ENCODE measurements at regions of chr7 and their contacts with region 1.

Region 1: GRCh38 chr7:99143853-99144672 is at the start of gene SMURF1:
- DNase-seq: peak; percentile 50 to 89 (median 80)
- ATAC-seq: peak; percentile 84
- H3K4me3 ChIP-seq: peak within 1 kb of the TSS; percentile 94
- H3K4me3 Mint-ChIP-seq: peak within 1 kb of the TSS; percentile 93 to 99 (median 96)
- H3K27ac ChIP-seq: peak within 1 kb of the TSS; percentile 90
- H3K27ac Mint-ChIP-seq: peak within 1 kb of the TSS; percentile 88 to 98 (median 96)
- H3K4me1 ChIP-seq: peaks cover 5 to 14% of the 10 kb centered on the region in 2 donors
- H3K4me1 Mint-ChIP-seq: peaks cover 30 to 49% (median 39%) of the 10 kb centered on the region in 7 donors
- H3K27me3 ChIP-seq: no peaks in the 10 kb centered on the region
- H3K27me3 Mint-ChIP-seq: peaks cover 0 to 7% (median 5%) of the 10 kb centered on the region in 5 donors
- total RNA-seq, gene SMURF1: 14.6 to 26.4 (median 20.8) TPM

Region 2: DNA sequence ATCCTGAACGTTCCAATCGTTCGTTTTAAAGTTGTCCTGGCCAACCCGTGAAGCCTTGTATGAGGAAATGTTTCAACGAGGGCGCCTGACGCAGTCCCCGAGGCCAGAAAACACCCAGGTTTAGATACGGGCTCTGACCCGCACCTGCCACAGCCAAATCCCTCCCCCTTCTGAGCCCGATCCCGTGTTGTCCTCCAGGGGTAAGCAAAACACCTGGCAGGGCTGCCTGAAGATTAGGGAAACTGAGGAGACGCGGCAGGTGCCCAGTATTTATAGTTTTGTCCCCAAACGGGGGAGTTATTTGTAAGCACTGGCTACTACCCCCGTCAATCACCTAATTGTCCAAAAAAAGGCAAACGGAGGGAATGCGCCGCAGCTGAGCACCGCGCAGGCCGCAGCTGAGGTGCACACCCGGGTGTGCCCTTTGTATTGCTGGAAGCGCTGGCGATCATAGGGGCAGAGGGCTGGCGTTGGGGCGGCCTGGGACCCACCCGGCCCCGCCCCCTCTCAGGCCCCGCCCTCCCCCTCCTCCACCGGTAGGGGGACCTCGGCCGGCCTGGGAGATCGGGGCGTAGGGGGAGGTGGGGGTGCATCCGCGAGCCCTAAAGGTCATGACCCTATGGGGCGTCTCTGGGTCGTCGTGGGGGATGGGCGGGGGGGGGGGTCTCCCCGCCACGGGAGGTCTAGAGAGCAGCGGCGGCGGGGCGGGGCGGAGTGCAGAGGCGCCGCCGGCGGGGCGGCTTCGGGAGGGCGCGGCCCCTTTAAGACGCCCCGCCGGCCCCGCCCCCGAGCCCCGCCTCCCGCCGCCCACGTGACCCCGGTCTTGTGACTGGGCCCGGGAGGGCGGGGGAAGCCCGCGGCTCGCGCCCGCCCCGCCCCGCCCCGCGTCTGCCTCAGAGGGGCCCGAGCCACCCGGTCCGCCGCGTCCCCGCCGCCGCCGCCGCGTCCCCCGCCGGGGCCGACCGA is 863.0 kb before region 1 on chr7 and contains the start of gene BRI3:
- CTCF ChIA-PET with region 1: no interaction called
- POLR2A ChIA-PET with region 1: no interaction called
- intact Hi-C with region 1: loop called (anchors 2 kb)
- DNase-seq: peak; percentile 73 to 93 (median 85)
- ATAC-seq: peak; percentile 87
- H3K4me3 ChIP-seq: peak within 1 kb of the TSS; percentile 96
- H3K4me3 Mint-ChIP-seq: peak within 1 kb of the TSS; percentile 85 to 91 (median 88)
- H3K27ac ChIP-seq: peak within 1 kb of the TSS; percentile 92
- H3K27ac Mint-ChIP-seq: peak within 1 kb of the TSS; percentile 83 to 94 (median 88)
- H3K4me1 ChIP-seq: peaks cover 10 to 30% of the 10 kb centered on the region in 2 donors
- H3K4me1 Mint-ChIP-seq: peaks cover 20 to 40% (median 30%) of the 10 kb centered on the region in 7 donors
- H3K27me3 ChIP-seq: no peaks in the 10 kb centered on the region
- H3K27me3 Mint-ChIP-seq: no peaks in the 10 kb centered on the region
- total RNA-seq, gene BRI3: 73.1 to 194 (median 86.5) TPM

Region 3: DNA sequence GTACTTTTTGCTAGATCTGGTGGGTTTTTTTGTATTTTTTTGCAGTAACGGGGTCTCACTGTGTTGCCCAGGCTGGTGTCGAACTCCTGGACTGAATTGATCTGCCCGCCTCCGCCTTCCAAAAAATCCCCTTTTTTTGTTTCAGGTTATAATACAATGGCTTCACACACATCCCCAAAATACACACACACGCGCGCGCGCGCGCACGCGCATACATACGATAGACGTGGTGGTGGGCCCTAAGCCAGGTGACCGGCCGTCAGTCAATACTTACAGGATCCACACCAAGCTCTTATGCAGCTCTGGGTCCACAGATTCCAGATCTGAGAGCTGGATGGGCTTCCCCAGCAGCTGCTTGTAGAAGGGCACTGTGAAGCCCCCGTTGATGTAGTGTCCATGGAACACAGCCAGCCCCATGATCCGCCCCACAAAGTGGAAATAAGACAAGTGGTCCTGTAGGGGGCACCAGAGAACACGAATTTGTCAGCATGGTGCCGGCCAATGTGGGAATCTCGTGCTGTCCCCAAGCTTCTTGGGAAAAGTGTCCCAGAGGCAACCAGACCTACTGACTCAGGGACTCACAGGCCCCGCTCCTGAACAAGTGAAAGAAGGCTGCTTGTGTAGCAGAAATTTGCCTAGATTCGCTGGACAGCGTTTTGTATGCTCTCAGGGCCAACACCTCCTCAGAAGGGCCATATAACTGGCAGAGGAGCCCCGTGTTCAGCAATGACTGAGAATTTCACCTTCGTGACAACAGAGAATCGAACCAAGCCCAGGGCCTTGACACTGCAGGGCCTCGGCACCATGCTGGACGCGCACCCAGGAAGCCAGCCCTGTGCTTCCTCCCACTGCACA is 103.7 kb before region 1 on chr7:
- CTCF ChIA-PET with region 1: no interaction called
- POLR2A ChIA-PET with region 1: no interaction called
- intact Hi-C with region 1: loop called (anchors 5 to 10 kb)
- DNase-seq: peak; percentile 33 to 69 (median 59)
- ATAC-seq: peak; percentile 82
- H3K4me3 ChIP-seq: no peak overlapping the region
- H3K4me3 Mint-ChIP-seq: no peak overlapping the region
- H3K27ac ChIP-seq: no peak overlapping the region
- H3K27ac Mint-ChIP-seq: peak overlapping the region in 4 of 9 donors; percentile 19 to 70 (median 64)
- H3K4me1 ChIP-seq: no peaks in the 10 kb centered on the region
- H3K4me1 Mint-ChIP-seq: peaks cover 0 to 7% (median 0%) of the 10 kb centered on the region in 7 donors
- H3K27me3 ChIP-seq: no peaks in the 10 kb centered on the region
- H3K27me3 Mint-ChIP-seq: no peaks in the 10 kb centered on the region

Region 4: GRCh38 chr7:99112097-99112496 is 32.0 kb before region 1 on chr7:
- CTCF ChIA-PET with region 1: no interaction called
- POLR2A ChIA-PET with region 1: interaction called, 5 read pairs
- intact Hi-C with region 1: loop called in 1 of 2 experiments (anchors 2 kb)
- DNase-seq: peak in 5 of 9 donors; percentile 12 to 31 (median 16)
- ATAC-seq: peak; percentile 52
- H3K4me3 ChIP-seq: no peak overlapping the region
- H3K4me3 Mint-ChIP-seq: peak overlapping the region in 8 of 10 donors; percentile 0 to 64 (median 43)
- H3K27ac ChIP-seq: peak overlapping the region; percentile 47
- H3K27ac Mint-ChIP-seq: peak overlapping the region in 8 of 9 donors; percentile 46 to 90 (median 74)
- H3K4me1 ChIP-seq: peaks cover 0 to 21% of the 10 kb centered on the region in 2 donors
- H3K4me1 Mint-ChIP-seq: peaks cover 34 to 87% (median 78%) of the 10 kb centered on the region in 7 donors
- H3K27me3 ChIP-seq: no peaks in the 10 kb centered on the region
- H3K27me3 Mint-ChIP-seq: no peaks in the 10 kb centered on the region

Region 5: GRCh38 chr7:99325545-99326407 is 181.7 kb after region 1 on chr7 and contains the start of gene ARPC1A:
- CTCF ChIA-PET with region 1: no interaction called
- POLR2A ChIA-PET with region 1: interaction called, 4 read pairs
- intact Hi-C with region 1: loop called (anchors 1 to 2 kb)
- DNase-seq: peak; percentile 84 to 96 (median 94)
- ATAC-seq: peak; percentile 95
- H3K4me3 ChIP-seq: peak within 1 kb of the TSS; percentile 77
- H3K4me3 Mint-ChIP-seq: peak within 1 kb of the TSS; percentile 86 to 99 (median 92)
- H3K27ac ChIP-seq: peak within 1 kb of the TSS; percentile 89
- H3K27ac Mint-ChIP-seq: peak within 1 kb of the TSS; percentile 78 to 95 (median 90)
- H3K4me1 ChIP-seq: peaks cover 25 to 26% of the 10 kb centered on the region in 2 donors
- H3K4me1 Mint-ChIP-seq: peaks cover 33 to 48% (median 43%) of the 10 kb centered on the region in 7 donors
- H3K27me3 ChIP-seq: no peaks in the 10 kb centered on the region
- H3K27me3 Mint-ChIP-seq: peaks cover 0 to 11% (median 0%) of the 10 kb centered on the region in 5 donors
- total RNA-seq, gene ARPC1A: 28.1 to 62.5 (median 43.2) TPM

Region 6: DNA sequence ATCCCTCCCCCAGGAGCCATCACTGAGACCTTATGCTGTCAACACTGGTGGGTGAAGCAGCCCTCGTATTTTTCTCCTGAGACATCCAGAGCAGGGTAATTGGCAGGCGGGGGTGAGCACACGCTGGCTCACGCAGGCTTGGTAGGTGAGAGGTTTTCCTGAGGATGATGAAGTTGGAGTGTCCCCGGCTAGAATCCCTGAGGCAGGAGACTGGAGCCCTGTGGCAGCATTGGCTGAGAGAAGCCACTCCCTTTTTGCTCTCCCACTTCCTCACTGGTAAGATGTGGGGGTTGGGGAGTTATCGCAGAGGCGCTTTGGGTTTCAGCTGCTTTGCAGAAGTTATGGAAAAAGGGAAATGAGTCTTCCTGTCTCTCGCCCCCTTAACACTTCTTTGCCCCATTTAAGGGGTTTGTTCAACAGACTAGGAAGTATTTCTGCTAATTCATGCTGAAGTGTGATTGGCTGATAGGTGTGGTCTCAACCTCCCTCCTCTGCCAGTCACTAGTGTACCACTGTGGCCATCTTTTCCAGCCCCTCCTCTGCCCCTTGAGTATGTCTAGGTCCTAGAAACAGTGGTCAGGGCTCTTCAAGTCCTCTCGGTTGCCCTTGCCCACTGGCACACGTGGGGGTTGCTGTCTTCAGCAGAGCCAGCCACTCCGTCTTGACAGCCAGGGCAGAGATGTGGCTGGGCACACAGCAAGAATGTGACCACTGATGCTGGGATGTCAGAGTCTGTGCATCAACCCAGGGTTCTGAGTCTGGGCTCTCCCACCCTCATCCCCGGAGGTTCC is 236.2 kb after region 1 on chr7:
- CTCF ChIA-PET with region 1: no interaction called
- POLR2A ChIA-PET with region 1: no interaction called
- intact Hi-C with region 1: loop called (anchors 2 kb)
- DNase-seq: peak in 7 of 9 donors; percentile 21 to 37 (median 30)
- ATAC-seq: peak; percentile 15
- H3K4me3 ChIP-seq: peak overlapping the region; percentile 78
- H3K4me3 Mint-ChIP-seq: peak overlapping the region; percentile 78 to 91 (median 84)
- H3K27ac ChIP-seq: peak overlapping the region; percentile 96
- H3K27ac Mint-ChIP-seq: peak overlapping the region; percentile 87 to 99 (median 98)
- H3K4me1 ChIP-seq: peaks cover 44 to 68% of the 10 kb centered on the region in 2 donors
- H3K4me1 Mint-ChIP-seq: peaks cover 29 to 70% (median 60%) of the 10 kb centered on the region in 7 donors
- H3K27me3 ChIP-seq: no peaks in the 10 kb centered on the region
- H3K27me3 Mint-ChIP-seq: no peaks in the 10 kb centered on the region

Region 7: DNA sequence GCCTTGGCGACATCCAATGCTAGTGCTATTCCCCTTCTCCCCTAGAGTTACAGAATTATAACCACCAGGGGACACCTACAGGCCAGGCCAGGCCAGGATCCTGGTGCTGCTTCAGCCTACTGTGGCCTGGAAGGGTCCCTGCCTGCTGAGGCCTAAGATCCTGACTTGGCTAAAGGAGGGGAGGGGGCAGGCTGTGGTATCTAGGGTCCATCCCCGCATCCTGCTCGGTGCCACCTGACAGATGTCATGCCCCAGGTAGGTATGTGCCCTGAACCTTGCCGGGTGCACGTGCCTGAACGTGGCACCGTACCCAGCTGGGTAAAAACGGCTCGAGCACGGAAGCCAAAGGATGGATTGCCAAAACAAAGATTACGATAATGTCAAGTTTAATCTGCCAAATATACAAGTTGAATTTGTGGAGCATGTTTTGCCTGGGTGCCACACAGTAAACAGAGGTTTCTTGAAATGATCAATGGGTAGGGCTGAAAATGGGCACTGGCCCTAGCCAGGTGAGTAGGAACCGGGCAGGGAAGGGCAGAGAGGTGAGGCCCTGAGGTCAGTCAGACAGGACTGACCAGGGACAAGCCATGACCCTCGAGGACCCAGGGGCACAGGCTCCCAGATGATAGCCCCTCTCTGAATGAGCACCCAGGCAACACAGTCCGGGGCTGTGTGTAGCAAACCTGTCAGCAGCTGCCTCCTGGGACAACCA is 251.7 kb after region 1 on chr7:
- CTCF ChIA-PET with region 1: no interaction called
- POLR2A ChIA-PET with region 1: no interaction called
- intact Hi-C with region 1: no loop called
- DNase-seq: no peak
- ATAC-seq: no peak
- H3K4me3 ChIP-seq: no peak overlapping the region
- H3K4me3 Mint-ChIP-seq: no peak overlapping the region
- H3K27ac ChIP-seq: peak overlapping the region; percentile 25
- H3K27ac Mint-ChIP-seq: peak overlapping the region in 6 of 9 donors; percentile 24 to 82 (median 36)
- H3K4me1 ChIP-seq: peaks cover 4 to 9% of the 10 kb centered on the region in 2 donors
- H3K4me1 Mint-ChIP-seq: peaks cover 18 to 36% (median 23%) of the 10 kb centered on the region in 7 donors
- H3K27me3 ChIP-seq: no peaks in the 10 kb centered on the region
- H3K27me3 Mint-ChIP-seq: no peaks in the 10 kb centered on the region

Region 8: DNA sequence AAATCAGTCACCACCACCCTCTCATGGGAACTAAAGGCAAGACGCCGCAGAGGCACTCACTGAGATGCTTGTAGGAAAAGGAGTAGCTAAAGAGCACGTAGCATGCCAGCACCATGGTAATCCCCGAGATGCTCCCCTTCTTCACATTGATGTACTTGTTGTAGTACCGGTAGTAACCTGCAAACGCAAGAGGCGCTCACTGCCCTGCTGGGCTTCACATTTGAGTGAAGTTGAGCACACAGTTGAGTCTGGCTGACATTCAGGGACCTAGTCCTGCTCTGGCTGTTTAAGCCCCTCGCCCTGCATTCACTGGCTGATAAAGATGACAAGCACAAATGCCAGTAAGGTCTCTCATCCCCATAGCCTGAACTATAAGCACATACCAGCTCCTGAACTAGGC is 315.0 kb after region 1 on chr7:
- CTCF ChIA-PET with region 1: no interaction called
- POLR2A ChIA-PET with region 1: no interaction called
- intact Hi-C with region 1: no loop called
- DNase-seq: peak in 2 of 9 donors; percentile 11 to 23
- ATAC-seq: peak; percentile 66
- H3K4me3 ChIP-seq: no peak overlapping the region
- H3K4me3 Mint-ChIP-seq: no peak overlapping the region
- H3K27ac ChIP-seq: peak overlapping the region; percentile 17
- H3K27ac Mint-ChIP-seq: peak overlapping the region in 3 of 9 donors; percentile 55 to 85 (median 63)
- H3K4me1 ChIP-seq: peaks cover 0 to 4% of the 10 kb centered on the region in 2 donors
- H3K4me1 Mint-ChIP-seq: peaks cover 14 to 46% (median 25%) of the 10 kb centered on the region in 7 donors
- H3K27me3 ChIP-seq: no peaks in the 10 kb centered on the region
- H3K27me3 Mint-ChIP-seq: no peaks in the 10 kb centered on the region

Region 9: DNA sequence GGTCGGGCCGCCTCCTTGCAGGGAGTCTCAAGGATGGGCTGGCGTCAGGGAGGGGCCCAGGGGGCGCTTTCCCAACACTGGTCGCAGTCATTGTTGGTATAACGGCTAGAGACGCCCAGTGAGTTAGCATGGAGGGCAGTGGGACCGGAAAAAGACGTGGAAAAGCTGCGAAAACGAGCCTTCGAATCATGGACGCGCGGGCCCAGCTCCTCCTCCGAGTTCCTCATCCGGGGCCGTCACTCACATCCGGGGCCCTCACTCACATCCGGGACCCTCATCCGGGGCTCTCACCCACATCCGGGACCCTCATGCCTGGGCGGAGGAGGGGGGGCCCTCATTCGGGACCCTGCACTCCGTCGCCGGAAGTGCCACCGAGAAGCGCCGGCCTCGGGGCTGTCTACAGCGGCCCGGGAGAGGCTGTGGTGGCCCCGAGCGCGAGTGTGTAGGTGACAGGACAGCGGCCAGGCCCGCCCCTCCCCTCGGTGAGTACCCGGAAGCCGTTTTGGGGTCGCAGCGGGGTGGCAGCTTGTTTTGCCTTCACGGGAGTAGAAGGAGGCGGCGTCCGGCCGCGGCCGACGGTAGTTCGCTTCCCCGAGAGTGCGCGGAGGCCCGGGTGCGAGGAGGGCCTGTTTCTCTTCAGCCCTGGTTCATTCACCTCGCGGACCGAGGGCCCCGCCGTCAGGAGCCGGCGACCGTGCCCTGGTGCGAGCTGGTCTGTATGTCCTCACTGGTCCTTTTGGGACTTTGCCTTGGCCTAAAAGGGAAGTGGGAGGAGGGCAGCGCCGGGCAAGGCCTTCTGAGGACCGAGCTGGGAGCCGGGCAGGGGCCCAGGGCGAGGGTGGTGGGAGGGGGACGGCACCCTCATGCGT is 414.5 kb after region 1 on chr7 and contains the start of gene ZNF655:
- CTCF ChIA-PET with region 1: no interaction called
- POLR2A ChIA-PET with region 1: no interaction called
- intact Hi-C with region 1: loop called in 1 of 2 experiments (anchors 5 kb)
- DNase-seq: peak; percentile 85 to 96 (median 93)
- ATAC-seq: peak; percentile 89
- H3K4me3 ChIP-seq: peak within 1 kb of the TSS; percentile 85
- H3K4me3 Mint-ChIP-seq: peak within 1 kb of the TSS; percentile 94 to 100 (median 97)
- H3K27ac ChIP-seq: peak within 1 kb of the TSS; percentile 99
- H3K27ac Mint-ChIP-seq: peak within 1 kb of the TSS; percentile 95 to 100 (median 99)
- H3K4me1 ChIP-seq: peaks cover 24 to 25% of the 10 kb centered on the region in 2 donors
- H3K4me1 Mint-ChIP-seq: peaks cover 32 to 69% (median 51%) of the 10 kb centered on the region in 7 donors
- H3K27me3 ChIP-seq: no peaks in the 10 kb centered on the region
- H3K27me3 Mint-ChIP-seq: no peaks in the 10 kb centered on the region
- total RNA-seq, gene ZNF655: 110 to 165 (median 157) TPM